Cardiac septum (tissue), 1 donor: ENCODE measurements at regions of chr2 and their contacts with region 1.

Region 1: DNA sequence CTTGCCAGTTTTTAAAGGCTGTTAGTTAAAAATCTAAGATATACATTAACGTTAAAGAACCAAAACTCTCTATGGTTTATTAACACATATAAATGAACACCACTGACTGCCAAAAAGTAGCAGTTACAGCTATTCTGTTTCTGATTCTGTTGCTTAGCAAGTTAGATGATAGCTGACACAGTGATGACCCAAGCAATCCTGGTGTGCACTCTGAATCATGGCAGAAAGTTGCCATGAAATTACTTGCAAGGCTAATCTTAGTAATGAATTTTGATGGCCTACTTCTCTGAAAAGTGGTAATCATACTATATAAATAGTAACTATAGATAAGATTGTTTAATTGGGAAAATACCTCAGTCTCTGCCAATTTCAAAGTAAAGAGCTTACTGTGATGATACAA is 57.7 kb downstream of the ROCK2 start:
- DNase-seq: no peak

Region 2: GRCh38 chr2:11140492-11140891 is 146.3 kb before region 1 on chr2:
- intact Hi-C with region 1: no loop called
- DNase-seq: no peak

Region 3: GRCh38 chr2:11329781-11330180 is 43.0 kb after region 1 on chr2:
- intact Hi-C with region 1: loop called (anchors 5 kb)
- DNase-seq: no peak